ENCODE measurements at regions of chr7 and their contacts with region 1.

Region 1: GRCh38 chr7:44999245-45000095 is 531 bp upstream of the CCM2 start:
- DNase-seq: peak; percentile 98 to 100
- H3K4me3 ChIP-seq: peak overlapping the region; percentile 98
- H3K27ac ChIP-seq: peak overlapping the region; percentile 66
- H3K4me1 ChIP-seq: peaks cover 37% of the 10 kb centered on the region
- H3K27me3 ChIP-seq: no peaks in the 10 kb centered on the region
- CTCF ChIP-seq: no peak

Region 2: GRCh38 chr7:44573464-44574286 is 425.8 kb before region 1 on chr7 and contains the start of gene DDX56:
- CTCF ChIA-PET with region 1: interaction called, 11 read pairs
- POLR2A ChIA-PET with region 1: no interaction called
- intact Hi-C with region 1: no loop called
- DNase-seq: peak; percentile 92 to 95
- H3K4me3 ChIP-seq: peak within 1 kb of the TSS; percentile 84
- H3K27ac ChIP-seq: peak within 1 kb of the TSS; percentile 33
- H3K4me1 ChIP-seq: peaks cover 23% of the 10 kb centered on the region
- H3K27me3 ChIP-seq: no peaks in the 10 kb centered on the region
- CTCF ChIP-seq: no peak
- total RNA-seq, gene DDX56: 113 and 125 TPM in 2 replicates

Region 3: DNA sequence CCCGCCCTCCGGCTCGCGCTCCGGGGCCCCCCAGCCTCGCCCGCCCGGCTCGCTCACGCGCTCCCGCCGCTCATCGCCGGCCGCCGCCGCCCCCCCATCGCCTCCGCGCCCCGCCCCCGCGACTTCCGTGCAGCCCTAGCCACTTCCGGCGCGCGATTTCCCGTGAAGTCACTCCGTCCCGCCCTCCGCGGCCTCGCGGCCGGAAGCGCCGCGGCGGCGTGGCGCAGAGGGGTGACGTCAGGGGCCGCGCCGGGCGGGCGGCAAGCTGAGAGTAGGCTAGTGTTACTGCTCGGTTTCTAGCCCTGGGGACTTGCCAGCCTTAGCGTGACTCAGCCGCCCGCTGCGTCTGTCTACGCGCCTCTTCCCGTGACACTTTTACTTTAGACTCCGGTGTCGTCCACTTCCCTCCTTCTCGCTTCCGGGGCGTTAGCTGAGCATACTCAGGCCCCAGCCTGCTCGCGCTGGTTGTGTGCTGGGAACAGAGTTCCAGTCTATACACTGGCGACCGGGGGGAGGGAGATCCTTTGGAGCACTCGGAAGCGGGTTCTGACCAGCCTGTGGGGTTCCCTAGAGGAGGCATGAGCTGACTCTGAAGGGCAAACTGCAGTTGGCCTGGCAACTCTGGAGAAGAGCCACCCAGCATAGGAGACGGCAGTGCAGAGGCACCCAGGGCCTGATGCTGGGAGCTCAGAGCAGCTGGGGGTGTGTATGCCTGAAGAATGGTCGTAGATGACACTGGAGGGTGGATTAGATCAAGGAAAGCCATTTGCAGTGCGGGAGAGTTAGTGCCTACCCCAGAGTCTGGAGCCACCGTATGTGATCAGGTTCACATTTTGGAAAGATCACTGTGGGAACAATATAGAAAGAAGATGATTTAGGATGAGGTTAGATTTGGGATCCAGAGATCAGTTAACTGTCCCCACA is 113.8 kb before region 1 on chr7 and contains the start of gene PURB:
- CTCF ChIA-PET with region 1: no interaction called
- POLR2A ChIA-PET with region 1: interaction called, 11 read pairs
- intact Hi-C with region 1: loop called (anchors 1 kb)
- DNase-seq: peak; percentile 97 to 98
- H3K4me3 ChIP-seq: peak within 1 kb of the TSS; percentile 77
- H3K27ac ChIP-seq: peak within 1 kb of the TSS; percentile 96
- H3K4me1 ChIP-seq: peaks cover 44% of the 10 kb centered on the region
- H3K27me3 ChIP-seq: no peaks in the 10 kb centered on the region
- CTCF ChIP-seq: no peak
- total RNA-seq, gene PURB: 33.1 and 38.2 TPM in 2 replicates

Region 4: DNA sequence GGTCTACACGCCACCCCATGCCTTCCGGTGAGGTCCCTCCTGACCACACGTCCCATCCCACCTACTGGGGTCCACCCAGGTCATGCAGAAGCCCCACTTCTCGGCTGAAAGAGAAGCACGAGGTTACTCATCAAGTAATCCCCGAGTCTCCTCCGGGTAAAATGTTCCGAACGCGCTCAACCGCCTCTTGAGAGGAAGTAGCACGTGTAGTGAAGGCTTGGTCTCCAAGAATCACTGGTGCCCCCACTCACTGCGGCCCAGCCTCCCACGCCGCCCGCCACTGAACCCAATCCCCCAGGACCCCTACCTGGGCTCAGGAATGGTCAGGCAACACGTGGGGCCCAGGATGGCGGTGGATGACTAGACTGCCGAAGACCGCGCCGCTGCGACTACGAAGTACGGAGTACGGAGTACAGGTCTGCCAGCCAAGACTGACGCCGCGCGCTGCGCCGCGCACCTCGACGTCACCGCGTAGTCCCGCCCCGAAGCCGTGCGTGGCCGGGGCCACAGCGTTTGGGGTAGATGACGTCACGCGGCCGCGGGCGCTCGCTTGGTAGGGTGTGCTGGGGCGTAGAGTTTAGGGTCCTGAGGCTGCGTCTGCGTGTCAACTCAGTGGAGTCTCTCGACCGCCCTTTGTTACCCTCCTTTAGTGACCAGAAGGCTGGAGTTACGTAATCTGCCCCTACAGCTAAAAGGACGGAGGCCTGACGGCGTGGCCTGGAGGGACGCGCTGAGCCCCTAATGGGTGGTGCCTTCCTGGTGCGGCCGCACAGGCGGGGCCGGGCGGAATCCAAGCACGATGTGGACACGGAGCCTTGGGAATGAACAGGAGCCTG is 13.0 kb before region 1 on chr7:
- CTCF ChIA-PET with region 1: interaction called, 3 read pairs
- POLR2A ChIA-PET with region 1: interaction called, 14 read pairs
- intact Hi-C with region 1: loop called (anchors 1 kb)
- DNase-seq: peak; percentile 92 to 98
- H3K4me3 ChIP-seq: peak overlapping the region; percentile 95
- H3K27ac ChIP-seq: peak overlapping the region; percentile 87
- H3K4me1 ChIP-seq: peaks cover 25% of the 10 kb centered on the region
- H3K27me3 ChIP-seq: no peaks in the 10 kb centered on the region
- CTCF ChIP-seq: no peak; the same call in 1 of the 2 replicates

Region 5: GRCh38 chr7:45021604-45022296 is 22.3 kb after region 1 on chr7:
- CTCF ChIA-PET with region 1: no interaction called
- POLR2A ChIA-PET with region 1: no interaction called
- intact Hi-C with region 1: no loop called
- DNase-seq: no peak
- H3K4me3 ChIP-seq: no peak overlapping the region
- H3K27ac ChIP-seq: no peak overlapping the region
- H3K4me1 ChIP-seq: no peaks in the 10 kb centered on the region
- H3K27me3 ChIP-seq: no peaks in the 10 kb centered on the region
- CTCF ChIP-seq: no peak

Region 6: DNA sequence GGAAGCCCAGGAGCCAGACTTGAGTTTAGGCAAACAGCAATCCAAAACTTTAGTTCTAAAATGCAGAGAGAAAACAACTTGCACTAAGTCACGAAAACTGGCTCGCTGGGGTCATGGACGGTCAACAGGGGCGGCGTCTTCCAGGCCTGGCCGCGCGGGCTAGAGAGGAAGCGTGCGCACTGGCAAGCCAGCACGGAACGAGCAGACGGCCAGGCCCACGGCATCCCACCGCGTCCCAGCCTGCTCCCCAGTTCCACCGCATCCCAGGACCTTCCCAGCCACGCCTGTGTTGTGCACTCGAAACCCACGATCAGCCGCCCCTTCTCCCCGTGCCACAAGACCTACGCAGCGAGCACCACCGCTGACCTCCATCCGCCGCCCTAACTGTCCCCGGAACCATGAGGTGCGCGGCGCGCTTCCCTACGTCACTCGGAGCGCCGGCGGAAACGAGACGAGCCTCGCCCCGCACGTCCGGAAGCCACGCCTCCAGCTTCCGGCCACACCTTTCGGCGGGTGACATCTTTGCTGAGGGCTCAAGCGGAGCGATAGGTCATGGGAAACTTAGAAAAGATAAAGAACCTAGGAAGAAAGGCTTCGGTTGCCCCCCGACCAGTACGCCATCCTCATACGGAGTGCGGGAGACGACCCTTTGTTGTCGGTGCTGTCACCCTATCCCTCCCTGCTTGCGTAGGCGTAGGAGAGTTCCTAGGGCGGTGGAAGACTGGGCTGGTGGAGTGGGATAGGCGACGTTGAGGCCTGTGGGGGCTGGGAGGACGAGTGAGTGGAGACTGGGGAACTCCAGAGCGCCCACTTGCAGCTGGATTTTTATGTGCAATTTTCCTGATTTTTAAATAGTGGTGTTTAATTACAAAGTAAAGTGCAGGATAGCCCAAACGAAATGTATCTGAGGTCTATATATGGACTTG is 112.1 kb after region 1 on chr7 and contains the start of gene TBRG4:
- CTCF ChIA-PET with region 1: no interaction called
- POLR2A ChIA-PET with region 1: interaction called, 10 read pairs
- intact Hi-C with region 1: loop called (anchors 2 kb)
- DNase-seq: peak; percentile 92 to 95
- H3K4me3 ChIP-seq: peak within 1 kb of the TSS; percentile 68
- H3K27ac ChIP-seq: peak within 1 kb of the TSS; percentile 82
- H3K4me1 ChIP-seq: peaks cover 25% of the 10 kb centered on the region
- H3K27me3 ChIP-seq: peaks cover 13% of the 10 kb centered on the region
- CTCF ChIP-seq: peak; percentile 67; the same call in 1 of the 2 replicates
- total RNA-seq, gene TBRG4: 117 and 120 TPM in 2 replicates

Region 7: GRCh38 chr7:45196374-45196773 is 196.9 kb after region 1 on chr7:
- CTCF ChIA-PET with region 1: no interaction called
- POLR2A ChIA-PET with region 1: no interaction called
- intact Hi-C with region 1: no loop called
- DNase-seq: no peak
- H3K4me3 ChIP-seq: no peak overlapping the region
- H3K27ac ChIP-seq: no peak overlapping the region
- H3K4me1 ChIP-seq: no peaks in the 10 kb centered on the region
- H3K27me3 ChIP-seq: peaks cover 95% of the 10 kb centered on the region
- CTCF ChIP-seq: no peak

Region 8: DNA sequence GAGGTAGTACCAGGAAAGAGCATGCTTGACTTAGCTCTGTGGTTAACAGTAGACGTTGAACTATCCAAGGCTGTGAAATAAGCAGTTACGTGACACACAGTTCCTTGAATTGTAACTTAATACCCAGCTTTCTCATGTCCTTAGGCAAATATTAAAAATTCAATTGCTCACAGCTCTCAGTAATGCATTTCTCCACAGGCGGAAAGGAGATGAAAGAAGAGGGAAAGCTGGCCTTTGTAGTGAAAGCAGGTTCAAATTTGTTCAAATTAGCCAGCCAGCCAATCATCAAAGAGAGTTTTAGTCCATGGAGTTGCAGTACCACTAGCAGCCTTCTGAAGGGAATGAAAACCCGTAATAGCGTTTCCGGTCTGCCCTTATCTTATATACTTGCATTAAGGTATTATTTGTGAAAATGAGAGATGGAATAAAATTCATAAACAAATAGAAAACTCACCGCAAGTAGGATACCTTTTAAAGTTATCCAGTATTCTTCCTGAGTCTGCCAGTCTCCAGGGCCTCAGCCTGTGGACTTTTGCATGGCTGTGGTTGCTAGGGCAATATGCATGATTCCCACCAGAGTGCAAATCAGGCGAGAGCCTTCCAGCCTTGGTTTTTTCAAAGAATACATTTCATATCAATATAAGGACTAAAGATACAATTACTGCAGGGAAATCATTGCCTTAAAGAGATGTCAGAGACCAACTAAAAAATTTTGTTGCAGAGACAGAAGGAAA is 1786.9 kb after region 1 on chr7:
- CTCF ChIA-PET with region 1: no interaction called
- POLR2A ChIA-PET with region 1: interaction called, 32 read pairs
- intact Hi-C with region 1: no loop called
- DNase-seq: peak; percentile 40 to 95
- H3K4me3 ChIP-seq: no peak overlapping the region
- H3K27ac ChIP-seq: peak overlapping the region; percentile 60
- H3K4me1 ChIP-seq: peaks cover 35% of the 10 kb centered on the region
- H3K27me3 ChIP-seq: no peaks in the 10 kb centered on the region
- CTCF ChIP-seq: no peak